HEK293T (cell line): ENCODE measurements at regions of chr2 and their contacts with region 1.

Region 1: GRCh38 chr2:74458132-74458925 is at the start of gene WBP1:
- DNase-seq: peak; percentile 93

Region 2: DNA sequence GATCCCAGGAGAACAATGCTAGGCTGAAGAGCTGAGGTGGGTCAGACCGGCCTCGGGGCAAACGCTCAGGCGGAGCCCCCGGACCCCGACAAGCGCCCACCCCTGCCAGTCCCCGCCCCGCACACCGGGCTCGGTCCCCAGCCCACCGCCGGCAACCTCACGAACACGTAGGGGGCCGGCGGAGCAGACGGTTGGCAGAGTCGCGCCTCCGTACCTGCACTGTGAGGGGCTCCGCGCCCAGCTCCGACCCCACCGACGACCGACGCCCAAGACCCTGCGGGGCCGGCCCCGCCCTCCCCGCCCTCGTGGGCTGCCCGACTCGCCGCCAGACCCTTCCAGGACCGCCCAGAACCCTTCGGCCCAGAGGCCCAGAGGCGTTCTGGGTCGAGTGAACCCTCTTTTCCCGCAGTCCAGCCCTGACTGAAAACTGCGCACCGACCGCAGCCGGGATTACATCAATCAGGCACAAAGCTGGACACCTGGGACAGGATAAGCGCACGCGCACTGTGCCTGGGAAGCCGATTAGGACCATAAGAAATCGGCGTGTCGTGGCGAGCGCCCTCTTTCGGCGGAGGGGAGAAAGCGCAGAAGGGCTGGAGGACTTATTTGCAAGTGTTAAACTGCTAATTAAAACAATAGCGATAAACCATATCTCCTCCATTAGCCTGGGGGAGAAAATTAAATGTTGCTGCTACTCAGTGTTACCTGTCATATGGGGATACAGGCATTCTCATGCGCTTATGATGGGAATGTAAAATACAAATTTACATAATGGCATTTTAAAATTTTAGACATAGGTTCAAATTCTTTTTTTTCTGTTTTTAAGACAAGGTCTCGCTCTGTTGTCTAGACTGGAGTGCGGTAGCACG is 66.5 kb before region 1 on chr2:
- CTCF ChIA-PET with region 1: no interaction called
- POLR2A ChIA-PET with region 1: interaction called, 15 read pairs
- DNase-seq: peak; percentile 91

Region 3: DNA sequence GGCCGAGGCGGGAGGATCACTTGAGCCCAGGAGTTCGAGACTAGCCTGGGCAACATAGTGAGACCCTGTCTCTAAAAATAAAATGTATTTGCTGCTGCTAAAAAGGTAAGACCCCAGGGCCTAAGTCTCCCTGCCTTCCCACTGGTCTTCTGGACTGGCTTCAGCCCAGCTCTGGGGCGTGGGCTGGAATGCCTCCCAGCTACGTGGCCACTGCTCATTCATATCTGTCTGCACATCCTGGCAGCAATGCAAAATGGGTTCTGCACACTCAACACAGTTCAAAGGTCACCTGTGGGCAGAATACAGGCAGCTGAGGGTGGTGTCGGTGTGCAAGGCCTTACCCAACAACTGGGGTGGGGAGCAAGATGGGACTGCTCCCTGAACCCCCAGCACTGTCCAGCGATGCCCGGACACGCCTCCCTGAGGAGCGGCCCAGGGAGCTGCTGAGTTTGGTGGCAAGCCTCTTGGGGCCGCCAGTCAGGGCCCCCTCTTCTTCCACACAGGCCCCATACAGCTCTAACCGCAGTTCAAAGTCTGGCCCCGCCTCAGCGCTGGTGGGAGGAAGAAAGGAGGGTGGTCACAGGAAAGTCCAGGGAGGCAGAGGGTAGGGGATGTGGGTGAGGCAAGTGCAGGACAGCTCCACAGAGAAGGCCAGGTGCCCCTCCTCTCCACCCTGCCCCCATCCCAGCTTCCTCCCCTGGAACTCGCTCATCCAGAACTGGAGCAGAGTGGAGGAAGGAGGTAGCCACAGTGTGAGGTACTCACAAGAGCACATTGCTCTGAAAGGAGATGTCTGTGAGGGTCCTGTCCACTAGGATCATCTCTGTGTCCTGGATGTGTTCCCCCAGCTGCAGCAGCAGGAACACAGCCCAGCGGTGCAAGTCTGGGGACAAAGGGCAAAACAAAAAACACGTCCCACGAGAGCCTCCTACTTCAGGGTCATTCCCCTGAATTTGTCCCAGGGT is 28.6 kb before region 1 on chr2:
- CTCF ChIA-PET with region 1: no interaction called
- POLR2A ChIA-PET with region 1: interaction called, 10 read pairs
- DNase-seq: no peak

Region 4: GRCh38 chr2:74472086-74472944 is 14.0 kb after region 1 on chr2 and contains the start of gene MRPL53:
- CTCF ChIA-PET with region 1: no interaction called
- POLR2A ChIA-PET with region 1: interaction called, 62 read pairs
- DNase-seq: peak; percentile 86

Region 5: GRCh38 chr2:74529357-74530238 is 71.3 kb after region 1 on chr2 and contains the starts of genes AUP1 and HTRA2:
- CTCF ChIA-PET with region 1: interaction called, 3 read pairs
- POLR2A ChIA-PET with region 1: interaction called, 12 read pairs
- DNase-seq: peak; percentile 96